ENCODE measurements at regions of chr7 and their contacts with region 1.

Region 1: GRCh38 chr7:142782922-142783900 is 12.4 kb downstream of the PRSS2 start:
- H3K4me3 ChIP-seq: peak overlapping the region; percentile 17
- H3K27ac ChIP-seq: no peak overlapping the region
- H3K4me1 ChIP-seq: no peaks in the 10 kb centered on the region
- CTCF ChIP-seq: peak; percentile 82

Region 2: DNA sequence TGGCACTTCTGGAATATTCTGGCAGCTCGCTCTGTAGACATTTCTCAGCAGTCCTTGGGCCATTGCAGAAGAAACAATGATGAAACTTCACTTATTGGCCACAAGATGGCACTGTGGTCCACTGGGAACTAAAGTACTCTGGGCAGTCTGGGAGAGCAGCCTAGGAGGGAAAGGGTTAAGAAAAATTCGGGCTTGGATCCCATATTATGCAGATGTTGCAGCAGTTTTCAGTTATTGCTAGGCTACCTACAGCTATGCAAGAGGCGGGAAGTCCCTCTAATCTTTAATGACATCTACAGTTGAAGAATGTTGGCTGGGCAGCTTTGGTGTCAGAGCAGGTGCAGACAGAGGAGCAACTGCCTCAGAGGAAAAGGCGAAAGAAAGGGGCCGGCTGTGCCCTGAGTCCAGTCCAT is 323.7 kb before region 1 on chr7:
- CTCF ChIA-PET with region 1: interaction called, 10 read pairs
- POLR2A ChIA-PET with region 1: no interaction called
- H3K4me3 ChIP-seq: no peak overlapping the region
- H3K27ac ChIP-seq: no peak overlapping the region
- H3K4me1 ChIP-seq: no peaks in the 10 kb centered on the region
- CTCF ChIP-seq: peak; percentile 59; the same call in 1 of the 2 replicates

Region 3: GRCh38 chr7:142508258-142508689 is 274.9 kb before region 1 on chr7:
- CTCF ChIA-PET with region 1: no interaction called
- POLR2A ChIA-PET with region 1: no interaction called
- H3K4me3 ChIP-seq: no peak overlapping the region
- H3K27ac ChIP-seq: no peak overlapping the region
- H3K4me1 ChIP-seq: no peaks in the 10 kb centered on the region
- CTCF ChIP-seq: no peak

Region 4: GRCh38 chr7:142603870-142604448 is 179.3 kb before region 1 on chr7:
- CTCF ChIA-PET with region 1: interaction called, 27 read pairs
- POLR2A ChIA-PET with region 1: no interaction called
- H3K4me3 ChIP-seq: no peak overlapping the region
- H3K27ac ChIP-seq: no peak overlapping the region
- H3K4me1 ChIP-seq: no peaks in the 10 kb centered on the region
- CTCF ChIP-seq: peak; percentile 40; the same call in 1 of the 2 replicates

Region 5: DNA sequence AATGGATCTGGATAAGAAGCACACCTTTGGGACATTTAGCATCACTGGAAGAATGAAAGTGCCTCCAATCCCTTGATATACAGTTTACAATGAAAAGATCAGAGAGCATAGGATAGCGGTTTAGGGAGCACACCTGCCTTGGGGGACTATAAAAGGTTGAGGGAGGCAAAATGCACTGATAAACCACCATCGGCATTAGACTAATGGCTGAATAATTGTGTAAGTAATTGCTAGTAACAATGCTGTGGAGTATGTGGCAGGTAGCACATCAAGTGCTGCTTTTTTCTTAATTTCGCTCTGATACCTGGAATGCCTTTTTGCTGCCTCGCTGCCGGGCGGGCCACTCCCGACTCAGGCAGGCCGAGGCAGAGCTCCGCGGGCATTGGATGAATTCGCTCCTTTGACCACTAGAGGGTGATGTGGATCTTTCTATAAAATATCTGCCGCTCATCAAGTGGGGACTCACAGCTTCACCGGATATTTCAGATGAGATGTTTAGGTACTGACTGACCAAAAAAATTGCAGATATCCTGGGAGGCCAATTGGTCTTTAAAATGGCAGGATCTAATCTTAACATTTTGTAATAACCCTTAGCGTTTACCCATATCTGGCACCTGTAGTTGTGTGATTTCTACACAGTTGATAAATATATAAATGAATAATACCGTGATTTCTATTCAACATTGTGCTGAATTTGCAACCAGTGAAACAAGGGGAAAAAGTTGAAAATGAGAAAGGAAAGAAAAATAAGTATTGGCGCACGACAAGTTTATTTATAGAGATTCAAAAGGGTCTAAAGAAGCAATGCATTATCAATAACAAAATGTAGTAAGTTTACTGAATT is 150.7 kb before region 1 on chr7:
- CTCF ChIA-PET with region 1: interaction called, 116 read pairs
- POLR2A ChIA-PET with region 1: interaction called, 5 read pairs
- H3K4me3 ChIP-seq: no peak overlapping the region
- H3K27ac ChIP-seq: no peak overlapping the region
- H3K4me1 ChIP-seq: no peaks in the 10 kb centered on the region
- CTCF ChIP-seq: peak; percentile 51; the same call in 1 of the 2 replicates

Region 6: GRCh38 chr7:142681314-142682092 is 101.7 kb before region 1 on chr7:
- CTCF ChIA-PET with region 1: interaction called, 14 read pairs
- POLR2A ChIA-PET with region 1: no interaction called
- H3K4me3 ChIP-seq: no peak overlapping the region
- H3K27ac ChIP-seq: no peak overlapping the region
- H3K4me1 ChIP-seq: no peaks in the 10 kb centered on the region
- CTCF ChIP-seq: no peak

Region 7: DNA sequence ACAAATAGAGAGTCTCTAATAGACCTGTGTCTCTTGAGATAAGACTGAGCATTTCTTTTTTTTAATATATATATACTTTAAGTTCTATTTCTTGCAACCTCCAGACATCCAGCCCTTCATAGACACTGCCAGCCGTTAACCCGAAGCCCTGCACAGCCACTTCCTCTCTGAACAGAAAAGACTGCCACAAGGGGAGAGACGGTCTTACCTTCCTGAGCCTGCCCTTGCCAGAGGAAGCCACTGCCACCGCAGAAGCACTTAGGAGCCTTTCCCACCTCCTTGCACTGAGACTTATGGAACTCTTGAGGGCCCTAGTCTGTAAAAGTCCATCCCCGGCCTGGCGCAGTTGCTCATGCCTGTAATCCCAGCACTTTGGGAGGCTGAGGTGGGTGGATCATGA is 65.8 kb before region 1 on chr7:
- CTCF ChIA-PET with region 1: interaction called, 66 read pairs
- POLR2A ChIA-PET with region 1: no interaction called
- H3K4me3 ChIP-seq: no peak overlapping the region
- H3K27ac ChIP-seq: no peak overlapping the region
- H3K4me1 ChIP-seq: no peaks in the 10 kb centered on the region
- CTCF ChIP-seq: no peak

Measured in HEK293 (cell line).